ENCODE measurements at regions of chr2 and their contacts with region 1.

Region 1: DNA sequence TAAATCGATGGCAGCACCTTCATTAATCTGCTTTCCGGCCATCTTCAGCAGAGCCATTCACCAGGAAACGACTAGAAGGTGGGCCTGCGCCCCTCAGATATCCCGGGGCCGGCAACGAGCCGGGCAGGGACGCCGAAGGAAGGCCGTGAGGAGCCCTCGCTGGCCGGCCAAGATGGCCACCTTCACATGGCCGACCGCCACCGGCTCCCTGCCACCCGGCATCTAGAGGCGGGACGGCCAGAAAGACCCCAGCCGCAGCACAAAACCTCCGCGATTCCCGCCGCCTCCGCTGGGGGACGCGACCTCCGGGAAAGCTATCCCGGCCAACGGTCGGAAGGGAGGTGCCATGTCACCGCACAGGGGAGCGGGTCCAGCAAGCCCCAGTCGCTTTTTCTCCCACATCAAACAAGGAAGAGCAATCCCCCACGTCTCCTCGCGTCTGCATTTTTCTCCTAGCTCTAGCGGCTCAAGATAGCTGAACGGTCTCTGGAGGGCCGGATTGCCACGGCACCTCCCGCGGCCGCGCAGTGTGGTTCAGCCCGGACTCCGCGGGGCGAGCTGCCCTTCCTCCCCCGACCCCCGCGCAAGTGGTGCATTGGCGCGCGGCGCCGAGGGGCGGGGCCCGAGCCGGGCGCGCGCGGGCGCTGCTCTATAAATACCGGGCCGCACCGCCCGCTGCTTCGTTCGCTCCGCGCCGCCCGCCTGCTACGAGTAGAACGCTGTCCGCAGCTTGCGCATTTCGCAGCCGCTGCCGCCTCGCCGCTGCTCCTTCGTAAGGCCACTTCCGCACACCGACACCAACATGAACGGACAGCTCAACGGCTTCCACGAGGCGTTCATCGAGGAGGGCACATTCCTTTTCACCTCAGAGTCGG is at the start of gene MAT2A:
- DNase-seq: peak; percentile 95
- ATAC-seq: peak; percentile 92
- total RNA-seq, gene MAT2A: 107 to 389 TPM

Region 2: GRCh38 chr2:85420536-85421259 is 118.0 kb before region 1 on chr2:
- intact Hi-C with region 1: loop called in 1 of 2 experiments (anchors 5 kb)
- DNase-seq: peak; percentile 92
- ATAC-seq: peak; percentile 77 to 78

Region 3: DNA sequence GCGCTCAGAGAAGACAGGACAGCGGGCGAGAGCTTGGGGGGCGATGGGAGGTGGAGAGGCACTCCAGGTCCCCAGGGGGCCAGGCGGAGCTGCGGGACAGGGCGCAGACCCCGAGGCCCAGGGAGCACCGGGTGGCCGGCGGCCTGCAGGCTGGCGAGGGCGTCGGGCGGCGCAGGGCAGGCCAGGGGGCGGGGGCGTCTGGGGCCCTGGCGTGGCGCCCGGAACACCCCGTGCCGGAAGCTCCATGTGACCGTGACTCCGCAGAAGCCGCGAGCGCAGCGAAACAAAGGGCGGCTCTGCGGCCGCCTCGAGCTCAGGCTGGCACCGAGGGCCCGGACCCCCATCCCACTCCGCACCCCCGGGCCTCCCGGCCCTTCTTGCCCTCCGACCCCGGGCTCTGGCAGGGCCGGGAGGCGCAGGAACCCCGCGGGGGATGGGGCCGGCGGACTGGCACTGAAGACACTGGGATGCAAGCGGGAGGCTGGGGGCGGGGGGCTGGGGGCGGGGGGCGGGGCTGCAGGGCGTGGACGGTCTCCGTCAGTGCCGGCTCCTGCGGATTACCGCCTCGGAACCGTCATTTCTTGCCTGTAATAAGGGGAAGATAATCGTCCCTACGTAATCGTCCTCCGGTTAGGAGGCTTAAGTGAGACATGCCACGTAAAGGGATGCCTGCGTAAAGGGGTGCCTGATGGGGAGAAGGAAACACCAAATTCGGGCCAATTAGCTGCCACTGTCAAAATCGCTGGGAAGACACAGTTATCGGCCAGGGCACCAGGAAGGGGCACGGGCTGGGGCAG is 101.0 kb before region 1 on chr2:
- intact Hi-C with region 1: loop called (anchors 1 to 5 kb)
- DNase-seq: peak; percentile 92
- ATAC-seq: peak; percentile 82 to 88

Region 4: GRCh38 chr2:85468704-85469349 is 69.9 kb before region 1 on chr2:
- intact Hi-C with region 1: no loop called
- DNase-seq: no peak
- ATAC-seq: peak in 1 of 2 donors; percentile 69

Region 5: GRCh38 chr2:85504778-85505323 is 33.9 kb before region 1 on chr2:
- intact Hi-C with region 1: loop called in 1 of 2 experiments (anchors 2 kb)
- DNase-seq: peak; percentile 60
- ATAC-seq: peak; percentile 43 to 88